HAP-1 (cell line): ENCODE measurements at regions of chr1 and their contacts with region 1.

Region 1: DNA sequence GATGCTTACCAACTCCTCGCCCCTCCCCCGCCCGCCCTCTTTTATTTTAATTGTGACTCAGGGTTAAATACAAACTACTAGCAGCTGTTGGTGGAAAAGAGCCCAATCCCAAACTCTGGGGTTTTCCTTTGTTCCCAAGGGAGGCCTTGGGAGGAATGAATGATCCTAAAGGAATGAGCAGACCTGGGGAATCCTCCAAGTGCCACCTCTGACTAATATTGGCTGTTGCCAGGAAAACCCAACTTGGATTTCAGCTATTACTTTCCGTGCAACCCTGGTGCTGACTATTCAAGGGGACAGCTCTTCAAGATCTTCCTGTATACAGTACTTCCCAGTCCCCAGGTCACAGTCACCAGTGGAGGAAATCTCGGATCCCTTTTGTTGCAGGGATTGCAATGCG is 1.3 kb upstream of the S100A10 start:
- DNase-seq: no peak
- H3K4me3 ChIP-seq: no peak overlapping the region
- H3K4me1 ChIP-seq: peaks cover 41% of the 10 kb centered on the region
- H3K27me3 ChIP-seq: no peaks in the 10 kb centered on the region

Region 2: DNA sequence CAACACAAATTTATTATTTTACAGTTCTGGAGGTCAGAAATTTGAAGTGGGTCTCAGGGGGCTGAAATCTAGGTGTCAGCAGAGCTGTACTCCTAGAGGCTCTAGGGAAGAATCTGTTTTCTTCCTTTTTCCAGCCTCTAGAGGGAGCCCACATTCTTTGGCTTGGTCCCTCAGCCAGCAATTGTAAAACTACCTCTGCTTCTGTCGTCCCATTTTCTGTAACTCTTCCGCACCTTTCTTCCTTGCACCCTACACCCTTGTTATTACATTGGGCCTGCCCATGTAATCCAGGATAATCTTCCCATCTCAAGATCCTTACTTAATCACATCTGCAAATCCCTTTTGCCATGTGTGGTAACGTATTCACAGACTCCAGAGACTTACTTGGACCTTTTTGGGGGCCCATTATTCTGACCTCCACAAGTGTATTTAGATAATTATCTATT is 60.9 kb before region 1 on chr1:
- in situ Hi-C with region 1: loop called (anchors 5 kb)
- DNase-seq: peak; percentile 66 to 74
- H3K4me3 ChIP-seq: no peak overlapping the region
- H3K4me1 ChIP-seq: no peaks in the 10 kb centered on the region
- H3K27me3 ChIP-seq: no peaks in the 10 kb centered on the region

Region 3: GRCh38 chr1:153150846-153151245 is 1155.9 kb after region 1 on chr1 and contains the start of gene SPRR2G:
- in situ Hi-C with region 1: no loop called
- DNase-seq: no peak
- H3K4me3 ChIP-seq: no peak within 1 kb of the TSS
- H3K4me1 ChIP-seq: no peaks in the 10 kb centered on the region
- H3K27me3 ChIP-seq: peaks cover 4% of the 10 kb centered on the region